Endothelial cell of umbilical vein (primary cell): ENCODE measurements at regions of chr1 and their contacts with region 1.

Region 1: GRCh38 chr1:999725-1000356 is at the start of gene HES4:
- DNase-seq: peak; percentile 92
- H3K4me3 ChIP-seq: peak within 1 kb of the TSS; percentile 47 to 55 (median 51)
- H3K27ac ChIP-seq: peak within 1 kb of the TSS; percentile 80
- H3K4me1 ChIP-seq: peaks cover 13% of the 10 kb centered on the region
- H3K27me3 ChIP-seq: peaks cover 0 to 19% of the 10 kb centered on the region in 2 experiments
- CTCF ChIP-seq: no peak
- POLR2A ChIP-seq: peak; percentile 69
- total RNA-seq, gene HES4: 32.0 and 37.6 TPM in 2 replicates

Region 2: GRCh38 chr1:1013105-1013921 is 13.5 kb after region 1 on chr1 and contains the start of gene ISG15:
- CTCF ChIA-PET with region 1: interaction called, 41 read pairs
- POLR2A ChIA-PET with region 1: no interaction called
- dilution Hi-C with region 1: no loop called
- intact Hi-C with region 1: loop called (anchors 2 kb)
- DNase-seq: peak; percentile 89
- H3K4me3 ChIP-seq: peak within 1 kb of the TSS; percentile 41 to 83 (median 81)
- H3K27ac ChIP-seq: peak within 1 kb of the TSS; percentile 54
- H3K4me1 ChIP-seq: peaks cover 10% of the 10 kb centered on the region
- H3K27me3 ChIP-seq: no peaks in the 10 kb centered on the region
- CTCF ChIP-seq: no peak
- POLR2A ChIP-seq: peak; percentile 61
- total RNA-seq, gene ISG15: 44.6 and 47.6 TPM in 2 replicates

Region 3: DNA sequence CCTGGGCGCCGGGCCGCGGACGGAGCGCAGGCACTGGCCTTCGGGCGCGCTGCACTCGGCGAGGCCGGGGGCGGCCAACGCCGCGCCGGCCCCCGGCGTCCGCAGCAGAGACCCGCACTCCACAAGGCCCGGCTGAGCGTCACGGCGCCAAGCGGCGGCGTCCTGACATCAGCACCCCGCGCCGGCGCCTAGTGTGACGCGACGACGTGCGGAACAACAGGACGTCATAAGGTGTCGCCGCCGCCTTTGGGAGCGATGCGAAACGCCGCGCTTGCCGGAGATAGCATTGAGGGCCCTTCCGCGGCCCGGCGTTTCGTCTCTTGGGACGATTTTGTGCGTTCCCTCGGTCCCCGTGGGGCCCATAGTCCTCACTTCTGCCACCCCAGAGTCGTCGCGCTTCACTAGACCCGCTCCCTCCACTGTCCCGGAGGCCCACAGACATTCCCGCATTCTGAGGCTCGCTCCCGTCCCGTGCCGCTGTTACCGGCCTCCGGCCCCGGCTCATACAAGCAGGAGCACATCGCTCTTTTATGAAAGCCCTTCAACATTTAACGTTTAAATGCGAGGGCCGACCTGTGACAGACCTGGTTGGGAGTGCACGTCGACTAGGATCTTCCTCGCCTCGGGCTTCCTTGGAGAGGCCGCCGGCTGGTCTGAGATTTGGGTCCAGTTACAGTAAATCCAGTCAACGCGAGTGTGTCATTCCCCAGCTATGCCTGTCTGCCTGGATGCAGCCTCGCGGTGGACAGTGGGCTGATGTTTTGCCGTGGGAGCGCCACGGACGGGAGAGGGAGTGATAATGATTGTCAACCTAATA is 575.1 kb after region 1 on chr1 and contains the start of gene SSU72:
- CTCF ChIA-PET with region 1: no interaction called
- POLR2A ChIA-PET with region 1: no interaction called
- dilution Hi-C with region 1: no loop called
- intact Hi-C with region 1: no loop called
- DNase-seq: peak; percentile 88
- H3K4me3 ChIP-seq: peak within 1 kb of the TSS; percentile 52 to 97 (median 75)
- H3K27ac ChIP-seq: peak within 1 kb of the TSS; percentile 95
- H3K4me1 ChIP-seq: peaks cover 12% of the 10 kb centered on the region
- H3K27me3 ChIP-seq: no peaks in the 10 kb centered on the region
- CTCF ChIP-seq: no peak
- POLR2A ChIP-seq: peak; percentile 93
- total RNA-seq, gene SSU72: 124 and 129 TPM in 2 replicates